Activated naive CD4-positive, alpha-beta T cell treated with anti-CD3 and anti-CD28 coated beads for 36 hours (primary cell): ENCODE measurements at regions of chr5 and their contacts with region 1.

Region 1: GRCh38 chr5:164504141-164504772 is 998.8 kb downstream of the MAT2B start:
- DNase-seq: peak; percentile 27
- H3K4me3 Mint-ChIP-seq: no peak overlapping the region
- H3K27ac Mint-ChIP-seq: no peak overlapping the region
- H3K4me1 Mint-ChIP-seq: no peaks in the 10 kb centered on the region
- H3K27me3 Mint-ChIP-seq: no peaks in the 10 kb centered on the region

Region 2: GRCh38 chr5:163540696-163541095 is 963.6 kb before region 1 on chr5:
- CTCF ChIA-PET with region 1: no interaction called
- intact Hi-C with region 1: no loop called
- DNase-seq: no peak
- H3K4me3 Mint-ChIP-seq: no peak overlapping the region
- H3K27ac Mint-ChIP-seq: no peak overlapping the region
- H3K4me1 Mint-ChIP-seq: peaks cover under 1% of the 10 kb centered on the region
- H3K27me3 Mint-ChIP-seq: peaks cover 3% of the 10 kb centered on the region

Region 3: DNA sequence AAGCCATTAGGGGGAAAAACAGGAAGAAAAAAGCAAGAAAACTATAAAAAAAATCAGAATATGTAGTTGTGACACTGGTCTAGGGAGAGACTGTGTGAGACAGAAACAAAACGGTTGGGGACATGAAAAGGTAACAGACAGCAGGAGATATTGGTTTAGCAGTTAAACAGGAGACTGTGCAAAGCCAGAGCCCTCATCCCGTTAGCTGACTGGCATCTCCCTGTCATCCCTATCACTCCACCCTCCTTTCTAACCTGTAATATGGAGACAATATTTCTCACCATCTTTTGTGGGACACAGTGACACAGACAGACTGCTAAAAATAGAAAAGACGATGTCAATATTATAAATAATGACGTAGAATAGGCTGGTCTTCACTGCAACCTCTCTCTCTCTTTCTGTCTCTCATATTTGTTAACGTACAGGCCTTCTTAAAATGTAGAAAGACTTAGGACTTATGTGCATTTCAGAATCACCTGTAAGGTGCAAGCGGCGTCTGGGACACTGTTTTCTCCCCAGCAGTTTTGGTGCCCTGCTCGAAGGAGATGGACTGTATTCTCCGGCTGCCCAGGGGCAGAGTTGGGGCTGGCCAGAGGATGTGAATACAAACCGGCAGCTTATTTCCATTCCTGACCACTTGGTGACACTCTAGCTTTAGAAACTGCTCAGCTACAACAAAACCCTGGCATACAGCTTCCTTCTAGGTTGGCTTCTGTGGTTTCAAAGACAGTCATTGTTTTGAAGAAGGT is 808.3 kb before region 1 on chr5:
- CTCF ChIA-PET with region 1: no interaction called
- intact Hi-C with region 1: loop called (anchors 1 kb)
- DNase-seq: peak; percentile 4
- H3K4me3 Mint-ChIP-seq: no peak overlapping the region
- H3K27ac Mint-ChIP-seq: no peak overlapping the region
- H3K4me1 Mint-ChIP-seq: no peaks in the 10 kb centered on the region
- H3K27me3 Mint-ChIP-seq: peaks cover 2% of the 10 kb centered on the region

Region 4: DNA sequence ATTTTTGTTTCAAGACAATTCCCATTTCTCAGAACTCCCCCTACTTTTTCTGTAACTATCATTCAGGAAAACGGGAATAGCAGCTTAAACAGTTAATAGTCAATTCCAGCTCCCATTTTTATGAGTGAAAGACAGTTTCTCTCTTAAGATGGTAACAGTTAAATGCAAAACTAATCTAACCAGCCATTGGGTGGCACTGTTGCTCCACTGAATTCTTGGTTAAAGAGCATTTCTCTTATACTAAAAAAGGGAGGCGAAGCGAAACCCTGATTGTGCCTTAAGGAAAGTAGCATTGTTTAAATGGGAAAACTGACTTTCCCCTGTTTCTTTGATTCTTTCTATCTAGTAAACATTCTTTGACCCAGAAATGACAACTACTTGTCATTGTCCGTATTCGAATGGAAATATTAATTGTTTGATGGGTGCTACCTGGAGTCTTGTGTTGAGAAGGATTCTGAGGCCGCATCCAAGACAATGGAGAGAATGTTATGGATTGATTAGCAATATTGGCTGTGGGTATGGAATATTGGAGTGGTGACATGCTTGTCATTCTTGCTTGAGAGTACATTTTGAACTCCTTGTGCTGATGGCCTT is 491.1 kb before region 1 on chr5:
- CTCF ChIA-PET with region 1: interaction called, 4 read pairs
- intact Hi-C with region 1: loop called (anchors 1 kb)
- DNase-seq: peak; percentile 62
- H3K4me3 Mint-ChIP-seq: no peak overlapping the region
- H3K27ac Mint-ChIP-seq: no peak overlapping the region
- H3K4me1 Mint-ChIP-seq: no peaks in the 10 kb centered on the region
- H3K27me3 Mint-ChIP-seq: no peaks in the 10 kb centered on the region

Region 5: DNA sequence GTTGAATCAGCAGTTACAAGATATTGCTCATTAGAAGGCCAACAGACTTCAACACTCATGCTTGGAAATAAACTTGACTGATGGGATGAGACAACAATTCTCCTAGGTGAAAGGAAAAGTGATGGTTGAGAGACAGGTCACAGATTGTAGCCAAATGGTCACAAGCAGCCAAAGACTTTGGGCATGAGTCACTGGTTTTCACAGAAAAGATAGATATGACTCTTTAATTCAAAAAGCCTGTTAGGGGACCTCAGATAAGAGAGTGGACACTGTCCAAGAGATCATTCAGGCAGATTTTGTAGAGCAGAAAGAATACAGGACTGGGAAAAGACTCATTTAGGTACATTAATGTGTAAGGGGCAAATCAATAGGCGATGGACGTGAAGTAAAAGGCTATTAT is 16.3 kb before region 1 on chr5:
- CTCF ChIA-PET with region 1: no interaction called
- intact Hi-C with region 1: no loop called
- DNase-seq: no peak
- H3K4me3 Mint-ChIP-seq: no peak overlapping the region
- H3K27ac Mint-ChIP-seq: no peak overlapping the region
- H3K4me1 Mint-ChIP-seq: no peaks in the 10 kb centered on the region
- H3K27me3 Mint-ChIP-seq: no peaks in the 10 kb centered on the region

Region 6: DNA sequence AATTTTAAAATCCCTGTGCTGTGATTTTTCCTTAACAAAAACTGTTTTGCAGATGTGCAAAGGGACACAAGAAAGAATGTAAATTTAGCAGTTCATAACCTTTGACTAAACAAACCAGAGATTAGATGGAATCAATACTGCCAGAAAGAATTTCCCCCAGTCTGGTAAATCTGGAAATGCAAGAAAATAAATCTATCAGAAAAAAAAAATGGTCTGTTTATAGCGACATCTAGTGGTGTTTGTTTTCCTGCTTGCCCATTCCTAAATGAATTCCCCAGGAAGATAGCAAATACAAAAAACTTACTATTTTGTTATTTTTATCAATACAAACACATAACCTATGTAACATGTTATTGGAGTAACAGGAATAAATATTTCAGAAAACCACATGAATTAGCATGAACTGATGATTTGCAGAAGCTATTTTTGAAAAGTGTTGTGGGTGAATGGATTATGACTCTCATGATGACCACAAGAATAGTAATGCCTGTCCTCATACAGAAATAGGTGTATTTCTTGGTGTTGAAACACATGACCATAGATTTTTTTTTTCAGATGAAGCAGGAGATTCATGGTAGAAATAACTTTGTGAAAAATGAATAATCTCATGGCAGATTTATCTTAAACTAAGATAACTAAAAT is 705.0 kb after region 1 on chr5:
- CTCF ChIA-PET with region 1: no interaction called
- intact Hi-C with region 1: loop called (anchors 1 kb)
- DNase-seq: no peak
- H3K4me3 Mint-ChIP-seq: no peak overlapping the region
- H3K27ac Mint-ChIP-seq: no peak overlapping the region
- H3K4me1 Mint-ChIP-seq: no peaks in the 10 kb centered on the region
- H3K27me3 Mint-ChIP-seq: no peaks in the 10 kb centered on the region